ENCODE measurements at regions of chr6 and their contacts with region 1.

Region 1: DNA sequence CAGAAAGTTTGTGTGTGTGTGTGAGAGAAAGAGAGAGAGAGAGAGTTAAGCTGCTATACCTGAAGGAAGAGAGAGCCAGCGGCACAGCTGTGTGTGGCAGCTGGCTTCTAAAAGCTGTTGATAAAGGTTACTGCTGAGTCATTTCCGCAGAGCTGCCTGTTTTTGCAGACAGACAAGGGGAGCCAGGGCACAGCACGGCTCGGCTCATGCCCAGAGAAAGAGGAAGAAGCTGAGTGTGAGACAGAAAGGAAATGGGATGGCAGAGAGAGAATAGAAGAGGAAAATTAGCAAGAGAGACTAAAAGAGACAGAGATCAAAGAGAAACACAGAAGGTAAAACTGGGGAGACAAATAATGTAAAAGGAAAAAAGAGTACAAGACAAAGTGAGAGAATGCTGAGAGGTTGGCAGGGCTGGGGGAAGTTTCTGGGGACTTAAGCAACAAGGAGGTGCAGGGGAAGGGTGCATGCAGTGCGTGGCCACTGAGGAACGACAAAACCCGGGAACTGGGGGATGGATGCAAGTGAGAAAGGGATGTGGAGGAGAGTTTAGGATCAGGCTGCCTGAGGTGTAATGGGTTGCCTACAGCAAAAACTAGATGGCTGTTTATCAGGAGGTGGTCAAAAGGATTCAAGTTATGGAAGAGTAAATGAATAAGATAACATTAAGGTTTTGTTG is 22.7 kb downstream of the HLA-A start:
- DNase-seq: peak; percentile 70
- H3K4me3 Mint-ChIP-seq: peak overlapping the region; percentile 67
- H3K27ac Mint-ChIP-seq: peak overlapping the region; percentile 85
- H3K4me1 Mint-ChIP-seq: peaks cover 45% of the 10 kb centered on the region
- H3K27me3 Mint-ChIP-seq: no peaks in the 10 kb centered on the region
- CTCF ChIP-seq: no peak

Region 2: GRCh38 chr6:29847871-29848630 is 117.0 kb before region 1 on chr6:
- CTCF ChIA-PET with region 1: interaction called, 6 read pairs
- intact Hi-C with region 1: loop called (anchors 5 kb)
- DNase-seq: peak; percentile 91
- H3K4me3 Mint-ChIP-seq: no peak overlapping the region
- H3K27ac Mint-ChIP-seq: no peak overlapping the region
- H3K4me1 Mint-ChIP-seq: peaks cover 30% of the 10 kb centered on the region
- H3K27me3 Mint-ChIP-seq: peaks cover 55% of the 10 kb centered on the region
- CTCF ChIP-seq: peak; percentile 97

Region 3: GRCh38 chr6:30006170-30007131 is 41.4 kb after region 1 on chr6:
- CTCF ChIA-PET with region 1: interaction called, 4 read pairs
- intact Hi-C with region 1: loop called (anchors 5 kb)
- DNase-seq: peak; percentile 20
- H3K4me3 Mint-ChIP-seq: peak overlapping the region; percentile 70
- H3K27ac Mint-ChIP-seq: peak overlapping the region; percentile 50
- H3K4me1 Mint-ChIP-seq: peaks cover 12% of the 10 kb centered on the region
- H3K27me3 Mint-ChIP-seq: peaks cover 41% of the 10 kb centered on the region
- CTCF ChIP-seq: no peak

Measured in Calu3 (cell line).